PC-9 (cell line): ENCODE measurements at regions of chr2 and their contacts with region 1.

Region 1: DNA sequence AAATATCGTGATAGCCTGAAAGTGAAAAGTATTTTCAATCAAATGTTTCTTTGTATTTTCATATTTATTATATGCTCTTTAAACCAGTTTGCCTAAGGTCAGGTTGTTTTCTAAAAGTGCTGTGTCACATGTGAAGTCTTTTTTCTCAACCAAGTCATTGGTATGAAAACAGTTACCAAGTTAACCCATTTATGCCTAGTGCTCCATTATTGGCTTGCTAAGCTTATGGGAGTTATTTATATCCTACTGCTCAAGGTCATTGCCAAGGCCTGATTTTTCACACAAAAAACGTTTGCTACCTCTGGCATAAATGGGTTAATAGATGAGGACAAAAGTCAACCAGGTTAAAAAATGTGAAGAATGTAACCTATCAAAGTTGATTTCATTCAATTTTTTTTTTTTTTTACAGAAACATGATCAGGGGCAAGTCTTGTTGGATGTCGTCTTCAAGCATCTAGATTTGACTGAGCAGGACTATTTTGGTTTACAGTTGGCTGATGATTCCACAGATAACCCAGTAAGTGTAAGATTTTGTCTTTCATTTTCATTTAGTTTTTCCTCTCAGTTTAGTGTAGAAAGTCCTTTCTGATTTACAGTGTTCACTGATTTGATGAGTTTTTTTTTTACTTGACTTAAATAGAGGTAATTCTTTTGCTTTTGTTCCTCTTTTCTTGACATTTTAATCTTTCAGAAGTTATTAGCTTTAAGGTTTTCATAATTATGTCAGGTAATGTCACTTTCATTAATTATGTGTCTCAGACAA is 102.6 kb downstream of the PTPN4 start:
- DNase-seq: no peak
- H3K4me3 ChIP-seq: no peak overlapping the region
- H3K27ac ChIP-seq: no peak overlapping the region
- H3K4me1 ChIP-seq: peaks cover 24% of the 10 kb centered on the region
- H3K27me3 ChIP-seq: no peaks in the 10 kb centered on the region
- CTCF ChIP-seq: no peak

Region 2: DNA sequence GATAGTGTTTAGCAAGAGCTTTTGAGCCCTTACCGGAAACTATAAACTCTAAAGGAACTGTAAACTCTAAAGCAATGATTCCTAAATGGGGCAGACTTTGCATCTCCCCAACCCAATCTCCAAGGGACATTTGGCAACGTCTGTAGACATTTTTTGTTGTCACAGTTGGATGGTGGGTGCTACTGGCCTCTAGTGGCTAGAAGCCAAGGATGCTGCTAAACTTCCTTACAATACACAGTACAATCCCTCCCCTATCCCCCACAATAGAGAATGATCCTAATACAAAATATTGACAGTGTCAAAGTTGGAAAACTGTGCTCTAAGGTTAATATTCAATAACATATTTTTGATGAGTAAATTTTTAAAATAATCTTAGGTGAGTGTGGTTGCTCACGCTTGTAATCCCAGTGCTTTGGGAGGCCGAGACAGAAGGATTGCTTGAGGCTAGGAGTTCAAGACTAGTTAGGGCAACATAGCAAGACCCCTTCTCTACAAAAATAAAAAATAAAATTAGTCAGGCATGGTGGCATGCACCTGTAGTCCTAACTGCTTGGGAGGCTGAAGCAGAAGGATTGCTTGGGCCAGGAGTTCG is 35.8 kb before region 1 on chr2:
- CTCF ChIA-PET with region 1: interaction called, 13 read pairs
- POLR2A ChIA-PET with region 1: no interaction called
- intact Hi-C with region 1: no loop called
- DNase-seq: no peak
- H3K4me3 ChIP-seq: no peak overlapping the region
- H3K27ac ChIP-seq: no peak overlapping the region
- H3K4me1 ChIP-seq: no peaks in the 10 kb centered on the region
- H3K27me3 ChIP-seq: no peaks in the 10 kb centered on the region
- CTCF ChIP-seq: peak; percentile 65